ENCODE measurements at regions of chr7 and their contacts with region 1.

Region 1: GRCh38 chr7:68222311-68222710 is 1225.7 kb downstream of the TYW1 start:
- DNase-seq: no peak
- H3K4me3 ChIP-seq: no peak overlapping the region
- H3K27ac ChIP-seq: no peak overlapping the region
- H3K4me1 ChIP-seq: no peaks in the 10 kb centered on the region
- H3K27me3 ChIP-seq: no peaks in the 10 kb centered on the region
- CTCF ChIP-seq: no peak
- POLR2A ChIP-seq: no peak

Region 2: GRCh38 chr7:68235937-68236336 is 13.6 kb after region 1 on chr7:
- intact Hi-C with region 1: loop called (anchors 1 kb)
- DNase-seq: no peak
- H3K4me3 ChIP-seq: no peak overlapping the region
- H3K27ac ChIP-seq: no peak overlapping the region
- H3K4me1 ChIP-seq: no peaks in the 10 kb centered on the region
- H3K27me3 ChIP-seq: no peaks in the 10 kb centered on the region
- CTCF ChIP-seq: no peak
- POLR2A ChIP-seq: no peak

Region 3: DNA sequence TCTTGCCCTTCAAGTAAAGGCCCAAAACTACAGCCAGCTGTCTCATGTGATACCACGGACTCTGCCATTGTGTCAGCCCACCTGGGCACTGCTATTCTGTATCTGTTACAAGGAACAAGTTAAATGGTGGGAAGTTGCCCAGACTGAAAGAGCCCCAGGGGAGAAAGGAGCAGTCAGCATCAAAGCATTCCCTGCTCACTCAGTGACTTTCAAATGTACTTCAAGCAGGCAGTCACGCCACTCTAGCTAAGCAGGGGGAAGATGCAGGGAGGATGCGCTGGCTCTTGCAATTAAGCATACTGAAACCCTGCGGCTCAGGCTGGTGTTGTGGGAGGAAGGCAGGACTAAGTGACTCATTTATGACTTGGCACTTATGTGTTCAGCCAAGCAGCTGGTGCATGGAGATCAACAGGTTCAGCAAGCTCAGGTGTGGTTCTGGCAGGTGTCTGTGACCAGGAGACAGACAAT is 23.9 kb after region 1 on chr7:
- intact Hi-C with region 1: no loop called
- DNase-seq: peak in 1 of 2 donors; percentile 57
- H3K4me3 ChIP-seq: no peak overlapping the region
- H3K27ac ChIP-seq: no peak overlapping the region
- H3K4me1 ChIP-seq: no peaks in the 10 kb centered on the region
- H3K27me3 ChIP-seq: no peaks in the 10 kb centered on the region
- CTCF ChIP-seq: no peak
- POLR2A ChIP-seq: no peak

Region 4: DNA sequence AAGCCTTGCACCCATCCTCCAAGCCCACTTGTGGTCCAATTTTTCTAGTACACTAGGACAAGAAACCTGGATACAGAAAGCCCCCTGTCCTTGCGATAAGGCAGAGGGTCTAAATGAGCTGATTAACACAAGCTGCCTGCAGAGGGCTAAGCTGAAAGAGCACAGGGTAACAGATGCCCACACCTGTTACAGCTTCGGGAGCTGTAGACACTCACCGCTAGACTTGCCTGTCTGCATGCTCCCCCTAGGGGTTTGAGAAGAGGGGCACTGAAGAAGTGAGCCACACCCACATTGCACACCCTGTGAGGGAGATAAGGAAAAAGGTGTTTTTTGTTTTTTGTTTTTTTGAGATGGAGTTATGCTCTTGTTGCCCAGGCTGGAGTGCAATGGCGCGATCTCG is 989.4 kb after region 1 on chr7:
- intact Hi-C with region 1: no loop called
- DNase-seq: no peak
- H3K4me3 ChIP-seq: no peak overlapping the region
- H3K27ac ChIP-seq: no peak overlapping the region
- H3K4me1 ChIP-seq: no peaks in the 10 kb centered on the region
- H3K27me3 ChIP-seq: no peaks in the 10 kb centered on the region
- CTCF ChIP-seq: no peak
- POLR2A ChIP-seq: no peak

Measured in breast epithelium (tissue), 4 donors.